ENCODE measurements at regions of chr17 and their contacts with region 1.

Region 1: DNA sequence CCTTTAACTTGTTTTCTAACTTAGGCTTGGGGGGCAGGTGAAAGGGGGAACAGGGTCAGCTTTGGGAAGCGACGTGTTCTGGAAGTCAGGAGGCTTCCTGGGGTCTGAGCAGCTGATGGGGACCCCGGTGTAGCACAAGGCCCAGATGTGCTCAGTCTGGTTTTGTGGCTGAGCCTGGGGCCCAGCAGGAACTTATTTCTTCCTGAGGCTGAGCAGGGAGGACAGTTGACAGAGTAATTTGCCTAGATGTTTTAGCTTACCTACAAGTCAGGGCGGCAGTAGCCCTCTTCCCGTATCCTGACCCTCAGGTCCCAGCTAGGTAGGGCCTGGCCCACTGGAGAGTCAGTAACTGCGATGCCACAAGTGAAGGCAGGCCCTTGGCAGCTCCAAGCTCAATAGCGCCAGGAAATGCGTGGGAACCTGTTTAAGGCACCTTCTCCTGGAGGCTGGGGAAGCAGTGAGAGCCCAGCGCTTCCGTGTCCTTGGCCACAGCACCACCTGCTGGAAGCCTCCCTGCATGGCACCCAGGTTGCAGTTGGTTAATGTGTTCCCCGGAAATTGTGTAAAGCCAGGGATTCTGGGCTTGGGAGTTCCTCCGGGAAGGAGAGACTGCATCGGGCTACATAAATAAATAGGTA is 5.2 kb downstream of the CCR7 start:
- DNase-seq: peak; percentile 77 to 91
- ATAC-seq: peak; percentile 41 to 73 (median 57)
- H3K4me3 ChIP-seq: peak overlapping the region; percentile 44
- H3K4me3 Mint-ChIP-seq: no peak overlapping the region
- H3K27ac ChIP-seq: peak overlapping the region; percentile 91
- H3K27ac Mint-ChIP-seq: peak overlapping the region; percentile 90 to 91
- H3K4me1 ChIP-seq: peaks cover 89% of the 10 kb centered on the region
- H3K4me1 Mint-ChIP-seq: peaks cover 40 to 61% of the 10 kb centered on the region in 2 donors
- H3K27me3 ChIP-seq: no peaks in the 10 kb centered on the region
- H3K27me3 Mint-ChIP-seq: peaks cover 11 to 27% of the 10 kb centered on the region in 2 donors
- CTCF ChIP-seq: peak; percentile 96

Region 2: GRCh38 chr17:40358323-40359038 is 201.6 kb before region 1 on chr17:
- intact Hi-C with region 1: loop called (anchors 1 kb)
- DNase-seq: peak; percentile 86 to 94
- ATAC-seq: peak; percentile 64 to 78 (median 75)
- H3K4me3 ChIP-seq: no peak overlapping the region
- H3K4me3 Mint-ChIP-seq: no peak overlapping the region
- H3K27ac ChIP-seq: no peak overlapping the region
- H3K27ac Mint-ChIP-seq: no peak overlapping the region
- H3K4me1 ChIP-seq: peaks cover 22% of the 10 kb centered on the region
- H3K4me1 Mint-ChIP-seq: peaks cover 9 to 31% of the 10 kb centered on the region in 2 donors
- H3K27me3 ChIP-seq: peaks cover 5% of the 10 kb centered on the region
- H3K27me3 Mint-ChIP-seq: peaks cover 7 to 18% of the 10 kb centered on the region in 2 donors
- CTCF ChIP-seq: peak; percentile 95

Region 3: DNA sequence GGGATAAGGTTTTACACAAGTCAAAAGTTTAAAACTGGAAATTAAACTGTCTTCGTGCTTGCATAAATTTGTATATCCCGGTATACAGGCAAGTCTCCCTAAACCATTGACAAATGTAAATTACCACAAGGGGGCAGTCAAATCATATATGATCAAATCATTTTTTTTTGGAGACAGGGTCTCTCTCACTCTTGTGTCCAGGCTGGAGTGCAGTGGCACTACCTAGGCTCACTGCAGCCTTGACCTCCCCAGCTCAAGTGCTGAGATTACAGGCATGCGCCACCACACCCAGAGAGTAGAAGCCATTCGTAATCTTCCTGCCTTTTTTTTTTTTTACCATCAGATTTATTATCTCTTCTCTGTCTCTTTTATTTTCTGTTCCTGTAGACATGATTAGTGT is 160.9 kb before region 1 on chr17:
- intact Hi-C with region 1: loop called (anchors 1 kb)
- DNase-seq: peak in 1 of 2 donors; percentile 79
- ATAC-seq: peak in 2 of 3 donors; percentile 69 to 76
- H3K4me3 ChIP-seq: no peak overlapping the region
- H3K4me3 Mint-ChIP-seq: no peak overlapping the region
- H3K27ac ChIP-seq: no peak overlapping the region
- H3K27ac Mint-ChIP-seq: no peak overlapping the region
- H3K4me1 ChIP-seq: no peaks in the 10 kb centered on the region
- H3K4me1 Mint-ChIP-seq: peaks cover 0 to 5% of the 10 kb centered on the region in 2 donors
- H3K27me3 ChIP-seq: no peaks in the 10 kb centered on the region
- H3K27me3 Mint-ChIP-seq: no peaks in the 10 kb centered on the region
- CTCF ChIP-seq: peak; percentile 74

Region 4: DNA sequence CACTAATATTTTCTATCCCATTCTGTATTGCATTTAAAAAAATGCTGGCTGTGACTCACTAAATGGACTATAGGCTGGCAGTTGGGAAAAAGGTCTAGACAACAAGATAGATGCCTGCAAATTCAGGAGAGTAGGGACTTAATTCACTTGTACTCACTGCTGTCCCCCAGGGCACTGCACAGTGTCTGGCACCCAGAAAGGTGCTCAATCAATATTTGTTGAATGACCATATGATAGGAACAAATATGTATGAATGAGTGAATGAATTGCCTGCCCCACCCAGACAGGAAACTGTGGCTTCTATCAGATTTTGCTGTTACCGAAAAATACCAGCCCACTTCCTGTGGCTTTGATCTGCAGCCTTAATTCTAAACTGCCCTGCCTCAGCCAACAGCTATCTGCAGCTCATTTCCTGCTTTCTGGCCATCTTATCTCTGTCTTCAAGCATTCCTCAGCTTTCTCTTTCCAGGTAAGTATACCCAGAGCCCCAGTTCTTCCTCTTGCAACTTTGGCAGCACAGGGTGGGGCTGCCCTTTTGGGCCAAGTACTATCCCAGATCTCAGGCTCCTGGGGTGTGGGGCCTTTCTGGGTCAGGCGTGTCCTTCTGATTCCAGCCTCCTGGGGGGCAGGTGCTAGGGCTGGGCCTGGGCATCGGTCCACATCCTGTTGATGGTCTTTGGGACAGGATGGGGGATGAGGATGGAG is 43.3 kb before region 1 on chr17:
- intact Hi-C with region 1: loop called (anchors 1 kb)
- DNase-seq: peak; percentile 60 to 92
- ATAC-seq: peak; percentile 71 to 85 (median 79)
- H3K4me3 ChIP-seq: peak overlapping the region; percentile 30
- H3K4me3 Mint-ChIP-seq: peak overlapping the region; percentile 87
- H3K27ac ChIP-seq: peak overlapping the region; percentile 15
- H3K27ac Mint-ChIP-seq: peak overlapping the region; percentile 70 to 86
- H3K4me1 ChIP-seq: peaks cover 64% of the 10 kb centered on the region
- H3K4me1 Mint-ChIP-seq: peaks cover 63 to 71% of the 10 kb centered on the region in 2 donors
- H3K27me3 ChIP-seq: no peaks in the 10 kb centered on the region
- H3K27me3 Mint-ChIP-seq: peaks cover 0 to 14% of the 10 kb centered on the region in 2 donors
- CTCF ChIP-seq: no peak

Region 5: DNA sequence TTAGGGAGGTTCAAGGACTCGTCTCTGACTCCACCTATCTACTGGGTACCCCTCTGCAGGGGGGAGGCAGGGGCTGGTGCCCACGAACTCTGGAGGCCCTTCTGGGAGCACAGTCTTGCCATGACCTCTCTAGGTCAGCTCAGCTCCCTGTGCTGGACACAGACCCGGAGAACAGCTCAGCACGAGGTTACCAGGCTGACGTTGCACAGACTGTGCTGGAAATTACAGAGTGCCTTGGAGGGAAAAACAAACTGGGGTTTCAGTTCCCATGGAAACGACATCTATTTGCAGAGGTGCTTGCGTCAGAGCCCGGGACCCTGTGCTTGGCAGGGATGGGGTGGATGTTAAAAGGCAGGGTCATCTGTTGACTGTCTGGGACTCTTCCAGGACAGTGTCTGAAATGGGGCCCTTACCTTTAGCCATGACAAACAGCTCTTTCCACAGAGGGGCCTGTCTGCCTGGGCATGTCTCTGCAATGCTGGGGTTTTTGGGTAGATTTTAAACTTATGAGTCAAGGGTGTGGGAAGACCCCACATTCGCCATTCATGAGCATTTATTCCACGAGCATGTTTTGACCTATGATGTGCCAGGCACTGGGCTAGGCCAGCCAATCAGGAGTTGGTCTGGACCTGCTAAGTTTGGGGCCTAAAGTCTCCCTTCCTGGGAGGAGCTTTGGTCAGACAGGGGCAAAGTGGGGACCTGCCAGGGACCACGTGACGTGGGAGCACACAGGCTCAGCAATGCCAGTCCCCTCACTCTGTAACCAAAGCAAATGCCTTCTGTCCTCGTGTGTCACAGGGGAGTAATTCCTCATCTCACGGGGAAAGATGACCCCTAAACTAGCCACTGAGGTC is 17.3 kb before region 1 on chr17:
- intact Hi-C with region 1: loop called (anchors 1 kb)
- DNase-seq: peak in 1 of 2 donors; percentile 73
- ATAC-seq: peak in 1 of 3 donors; percentile 24
- H3K4me3 ChIP-seq: no peak overlapping the region
- H3K4me3 Mint-ChIP-seq: peak overlapping the region; percentile 35
- H3K27ac ChIP-seq: peak overlapping the region; percentile 65
- H3K27ac Mint-ChIP-seq: peak overlapping the region; percentile 64 to 87
- H3K4me1 ChIP-seq: peaks cover 77% of the 10 kb centered on the region
- H3K4me1 Mint-ChIP-seq: peaks cover 43 to 49% of the 10 kb centered on the region in 2 donors
- H3K27me3 ChIP-seq: peaks cover 7% of the 10 kb centered on the region
- H3K27me3 Mint-ChIP-seq: peaks cover 0 to 13% of the 10 kb centered on the region in 2 donors
- CTCF ChIP-seq: no peak

Region 6: GRCh38 chr17:40608061-40608588 is 48.1 kb after region 1 on chr17:
- intact Hi-C with region 1: loop called (anchors 1 kb)
- DNase-seq: peak; percentile 51 to 91
- ATAC-seq: peak; percentile 80 to 93 (median 89)
- H3K4me3 ChIP-seq: no peak overlapping the region
- H3K4me3 Mint-ChIP-seq: peak overlapping the region; percentile 78
- H3K27ac ChIP-seq: peak overlapping the region; percentile 85
- H3K27ac Mint-ChIP-seq: peak overlapping the region; percentile 89 to 92
- H3K4me1 ChIP-seq: peaks cover 53% of the 10 kb centered on the region
- H3K4me1 Mint-ChIP-seq: peaks cover 46 to 47% of the 10 kb centered on the region in 2 donors
- H3K27me3 ChIP-seq: no peaks in the 10 kb centered on the region
- H3K27me3 Mint-ChIP-seq: peaks cover 0 to 3% of the 10 kb centered on the region in 2 donors
- CTCF ChIP-seq: no peak

Region 7: DNA sequence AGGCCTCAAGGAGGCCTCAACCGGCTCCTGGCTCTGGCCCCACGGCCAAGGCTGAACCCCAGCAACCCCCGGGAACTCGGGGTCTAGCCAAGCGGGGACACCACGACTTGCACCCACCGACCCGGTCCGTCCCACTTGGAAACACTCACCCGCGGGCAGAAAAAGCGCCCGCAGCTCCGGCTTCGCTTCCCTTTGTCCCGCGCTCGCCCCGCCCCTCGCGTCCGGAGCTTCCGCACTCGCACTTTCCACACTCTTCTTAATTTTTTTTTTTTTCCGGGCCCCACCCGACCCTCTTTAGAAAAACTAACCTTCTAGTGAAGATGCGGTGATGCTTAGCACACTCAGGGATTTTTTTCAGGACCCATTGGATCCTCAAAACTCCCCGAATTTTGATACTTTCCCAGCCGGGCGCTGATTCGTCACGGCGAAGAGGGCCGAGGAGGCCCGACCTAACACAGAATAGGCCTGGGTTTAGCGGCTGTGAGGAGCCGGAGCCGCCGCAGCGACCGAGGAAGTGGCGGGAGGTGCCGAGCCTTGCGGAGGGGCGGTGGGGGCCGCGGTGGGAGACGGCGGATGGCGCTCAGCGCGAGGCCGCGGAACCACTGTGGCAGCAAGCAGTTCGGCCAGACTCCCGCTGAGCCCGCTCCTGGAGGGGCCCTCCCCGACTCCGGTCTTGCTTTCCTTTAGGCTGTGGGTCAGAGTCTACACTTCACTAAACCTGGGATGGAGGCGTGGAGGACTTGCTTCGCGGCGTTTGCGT is 87.7 kb after region 1 on chr17 and contains the start of gene SMARCE1:
- intact Hi-C with region 1: loop called (anchors 5 kb)
- DNase-seq: peak; percentile 79 to 85
- ATAC-seq: peak; percentile 71 to 87 (median 85)
- H3K4me3 ChIP-seq: peak within 1 kb of the TSS; percentile 87
- H3K4me3 Mint-ChIP-seq: peak within 1 kb of the TSS; percentile 98
- H3K27ac ChIP-seq: peak within 1 kb of the TSS; percentile 97
- H3K27ac Mint-ChIP-seq: peak within 1 kb of the TSS; percentile 99
- H3K4me1 ChIP-seq: peaks cover 19% of the 10 kb centered on the region
- H3K4me1 Mint-ChIP-seq: peaks cover 38 to 50% of the 10 kb centered on the region in 2 donors
- H3K27me3 ChIP-seq: no peaks in the 10 kb centered on the region
- H3K27me3 Mint-ChIP-seq: no peaks in the 10 kb centered on the region
- CTCF ChIP-seq: no peak
- total RNA-seq, gene SMARCE1: 87.8 to 102 (median 101) TPM

Measured in natural killer cell (primary cell).